Activated T-helper 2 cell treated with anti-CD3 and anti-CD28 coated beads, Interferon-gamma antibody, Interleukin-2, Interleukin-4, amounts not matched to agents 10 μg/mL and 5 μg/mL and 100 μg/mL, durations not matched to agents 14 hours and 24 hours and 36 hours (primary cell): ENCODE measurements at regions of chr1 and their contacts with region 1.

Region 1: DNA sequence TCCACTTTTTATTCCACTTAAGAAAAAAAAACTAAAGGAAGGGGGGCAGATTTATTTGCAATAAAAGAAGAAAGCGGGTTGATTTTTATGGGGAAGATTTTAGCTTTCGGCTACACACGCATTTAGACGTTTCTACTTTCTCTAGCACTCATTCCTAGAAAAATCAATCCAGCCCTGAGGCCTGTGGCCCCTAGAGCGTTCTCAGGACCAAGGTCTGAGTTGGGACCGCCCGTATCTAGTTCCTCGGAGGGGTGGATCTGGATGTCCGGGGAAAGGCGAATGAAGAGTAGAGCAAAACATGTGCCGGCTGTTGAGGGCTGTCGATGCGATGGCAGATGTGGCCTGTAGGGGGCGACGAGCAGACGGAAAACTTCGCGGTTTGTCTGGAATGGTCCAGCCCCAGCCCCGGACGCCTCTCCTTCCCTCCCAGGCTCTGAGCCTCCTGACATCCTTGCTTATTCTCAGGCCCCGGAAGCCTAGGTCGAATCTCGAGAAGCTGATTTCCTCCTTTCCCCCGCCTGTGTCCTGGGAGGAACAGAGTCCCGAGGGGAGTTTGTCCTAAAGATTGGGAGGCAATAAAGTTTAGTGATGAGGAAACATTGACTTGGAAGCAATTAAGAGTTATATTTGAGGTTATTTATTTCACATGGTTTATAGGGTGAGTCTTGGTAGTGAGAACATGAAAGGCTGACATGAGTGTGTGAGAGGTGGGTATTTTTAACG is 5.2 kb downstream of the FOXD3 start:
- DNase-seq: peak; percentile 56
- H3K4me3 Mint-ChIP-seq: peak overlapping the region; percentile 21
- H3K27ac Mint-ChIP-seq: peak overlapping the region; percentile 17
- H3K4me1 Mint-ChIP-seq: peaks cover 19% of the 10 kb centered on the region
- H3K27me3 Mint-ChIP-seq: peaks cover 68% of the 10 kb centered on the region

Region 2: DNA sequence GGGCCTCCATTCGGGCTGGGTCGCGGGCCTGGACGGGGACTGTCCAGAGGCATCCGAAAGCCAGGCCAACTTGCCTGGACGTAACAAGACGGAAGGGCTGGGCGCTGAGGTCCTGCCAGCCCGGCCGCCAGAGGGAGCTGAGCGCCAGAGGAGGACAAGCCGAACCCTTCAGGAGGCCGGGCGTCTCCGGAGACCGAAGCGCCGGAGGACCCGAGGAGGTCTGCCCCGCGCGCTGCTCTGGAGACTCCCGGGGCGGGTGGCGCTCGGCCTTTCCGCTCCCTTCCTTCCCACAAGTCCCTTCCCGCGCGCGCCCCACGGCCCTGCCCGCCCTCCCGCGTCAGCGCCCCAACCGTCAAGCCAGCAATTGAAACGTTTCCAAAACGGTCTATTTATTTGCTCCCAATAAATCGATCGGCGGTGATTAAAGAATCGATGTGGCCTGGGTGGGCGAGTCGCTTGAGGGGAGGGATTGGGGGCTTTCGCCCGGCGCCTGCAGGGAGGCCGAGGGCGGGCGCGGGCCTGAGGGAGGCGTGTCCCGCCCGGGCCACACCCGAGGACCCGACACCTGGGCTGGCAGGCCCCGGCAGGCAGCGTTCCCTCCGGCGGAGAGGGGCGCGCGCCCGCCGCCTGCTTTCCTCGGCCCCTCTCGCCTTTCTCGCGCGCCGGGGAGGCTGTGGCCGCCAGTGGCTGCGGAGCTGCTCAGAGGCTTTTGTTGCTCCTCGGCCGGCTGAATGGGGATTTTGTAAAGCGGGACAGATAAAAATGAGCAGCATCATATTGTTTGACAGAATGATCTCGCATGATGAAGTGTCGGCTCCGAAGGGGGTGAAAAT is 10.4 kb before region 1 on chr1:
- intact Hi-C with region 1: loop called (anchors 1 kb)
- DNase-seq: peak; percentile 48
- H3K4me3 Mint-ChIP-seq: peak overlapping the region; percentile 74
- H3K27ac Mint-ChIP-seq: no peak overlapping the region
- H3K4me1 Mint-ChIP-seq: peaks cover 23% of the 10 kb centered on the region
- H3K27me3 Mint-ChIP-seq: peaks cover 68% of the 10 kb centered on the region

Region 3: DNA sequence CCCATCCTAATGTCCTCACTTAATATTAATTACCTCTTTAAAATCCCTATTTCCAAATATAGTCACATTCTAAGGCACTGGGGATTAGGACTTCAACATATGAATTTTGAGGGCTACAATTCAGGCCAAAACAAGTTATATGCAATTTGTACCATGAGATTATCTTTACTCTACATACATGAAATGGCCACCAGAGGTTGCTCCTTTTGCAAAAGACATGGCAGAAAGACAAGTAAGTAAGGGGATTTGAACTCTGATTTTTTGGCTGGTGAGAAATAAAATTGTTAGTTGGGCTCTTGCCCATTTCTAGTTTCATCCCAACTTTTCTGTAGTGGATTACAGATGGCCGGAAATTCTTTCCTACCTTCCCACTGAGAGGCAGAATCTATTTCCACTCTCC is 35.0 kb after region 1 on chr1:
- intact Hi-C with region 1: no loop called
- DNase-seq: no peak
- H3K4me3 Mint-ChIP-seq: no peak overlapping the region
- H3K27ac Mint-ChIP-seq: no peak overlapping the region
- H3K4me1 Mint-ChIP-seq: peaks cover 7% of the 10 kb centered on the region
- H3K27me3 Mint-ChIP-seq: peaks cover 29% of the 10 kb centered on the region

Region 4: GRCh38 chr1:63442141-63442475 is 114.5 kb after region 1 on chr1:
- intact Hi-C with region 1: loop called (anchors 1 kb)
- DNase-seq: no peak
- H3K4me3 Mint-ChIP-seq: no peak overlapping the region
- H3K27ac Mint-ChIP-seq: no peak overlapping the region
- H3K4me1 Mint-ChIP-seq: peaks cover 3% of the 10 kb centered on the region
- H3K27me3 Mint-ChIP-seq: no peaks in the 10 kb centered on the region

Region 5: GRCh38 chr1:63537940-63538339 is 210.4 kb after region 1 on chr1:
- intact Hi-C with region 1: loop called (anchors 5 kb)
- DNase-seq: no peak
- H3K4me3 Mint-ChIP-seq: no peak overlapping the region
- H3K27ac Mint-ChIP-seq: no peak overlapping the region
- H3K4me1 Mint-ChIP-seq: no peaks in the 10 kb centered on the region
- H3K27me3 Mint-ChIP-seq: no peaks in the 10 kb centered on the region